GM10248 (cell line): ENCODE measurements at regions of chr14 and their contacts with region 1.

Region 1: DNA sequence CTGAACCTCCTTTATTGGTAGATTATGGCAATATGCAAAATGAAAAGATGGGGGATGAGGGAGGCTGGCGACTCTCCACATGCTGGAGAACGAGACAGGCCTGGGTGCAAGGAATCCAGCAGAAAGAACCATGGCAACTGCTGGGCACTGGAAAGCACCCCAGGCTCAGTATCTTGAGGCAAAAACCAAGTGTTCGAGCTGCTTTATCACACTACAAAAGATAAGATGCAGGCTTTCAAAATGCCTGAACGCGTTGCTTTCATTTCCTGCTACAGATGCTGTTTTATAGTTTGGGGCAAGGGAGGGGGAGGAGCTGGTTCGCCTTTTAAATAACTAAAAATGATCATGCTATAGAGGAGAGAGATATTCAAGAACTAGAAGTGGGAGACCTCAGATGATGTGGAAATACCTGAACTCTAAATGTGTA is 38.9 kb downstream of the NIN start:
- DNase-seq: no peak
- CTCF ChIP-seq: no peak

Region 2: DNA sequence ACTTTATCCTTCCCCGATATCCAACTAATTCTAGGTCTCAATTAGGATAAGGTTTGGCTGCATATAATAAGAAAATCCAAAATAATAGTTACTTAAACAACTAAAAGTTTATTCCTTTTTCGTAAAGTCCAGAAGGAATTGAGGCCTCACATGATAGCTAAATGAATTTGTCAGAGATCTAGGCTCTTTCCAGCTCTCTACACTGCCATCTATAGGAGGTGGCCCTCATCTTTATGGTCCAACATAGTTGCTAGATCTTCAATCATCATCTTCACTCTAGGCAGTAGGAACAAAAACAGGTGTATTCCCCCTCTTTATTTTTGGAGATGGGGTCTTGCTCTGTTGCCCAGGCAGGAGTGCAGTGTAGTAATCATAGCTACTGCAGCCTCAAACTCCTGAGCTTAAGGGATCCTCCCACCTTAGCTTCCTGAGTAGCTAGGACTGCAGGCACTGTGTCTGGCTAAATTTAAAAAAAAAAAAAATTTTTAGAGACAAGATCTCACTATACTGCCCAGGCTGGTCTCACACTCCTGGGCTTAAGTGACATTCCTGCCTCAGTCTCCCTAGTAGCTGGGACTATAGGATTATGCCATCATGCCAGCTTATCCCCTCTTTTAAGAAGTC is 77.5 kb before region 1 on chr14:
- CTCF ChIA-PET with region 1: no interaction called
- POLR2A ChIA-PET with region 1: no interaction called
- DNase-seq: peak; percentile 59
- CTCF ChIP-seq: peak; percentile 59

Region 3: DNA sequence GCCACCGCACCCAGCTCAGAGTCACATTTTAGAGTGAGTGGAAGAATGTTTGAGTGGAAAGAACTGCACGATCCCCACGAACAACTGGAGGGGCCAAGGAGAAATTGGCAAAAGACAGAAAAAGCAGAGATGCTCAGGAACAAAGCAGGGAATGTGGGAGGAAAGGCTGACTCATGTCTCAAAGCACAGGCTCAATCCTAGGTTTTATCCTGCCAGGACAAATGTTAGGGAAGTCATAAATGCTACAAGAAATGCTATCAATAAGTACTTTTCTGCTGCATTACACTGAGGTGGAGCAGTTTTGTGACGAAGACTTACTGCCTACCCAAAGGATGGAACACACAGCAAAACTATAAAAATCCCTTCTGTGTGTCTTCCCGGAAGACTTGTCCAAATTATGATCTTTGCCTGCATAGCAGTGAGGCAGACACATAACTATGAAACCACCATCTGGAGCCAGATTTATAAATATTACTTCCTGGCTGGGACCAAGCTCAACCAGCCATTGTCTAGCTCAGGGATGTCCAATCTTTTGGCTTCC is 12.2 kb after region 1 on chr14:
- CTCF ChIA-PET with region 1: interaction called, 42 read pairs
- POLR2A ChIA-PET with region 1: interaction called, 3 read pairs
- DNase-seq: no peak
- CTCF ChIP-seq: no peak

Region 4: GRCh38 chr14:50813544-50813863 is 21.4 kb after region 1 on chr14:
- CTCF ChIA-PET with region 1: interaction called, 42 read pairs
- POLR2A ChIA-PET with region 1: interaction called, 12 read pairs
- DNase-seq: no peak
- CTCF ChIP-seq: no peak